ENCODE measurements at regions of chr16 and their contacts with region 1.

Region 1: DNA sequence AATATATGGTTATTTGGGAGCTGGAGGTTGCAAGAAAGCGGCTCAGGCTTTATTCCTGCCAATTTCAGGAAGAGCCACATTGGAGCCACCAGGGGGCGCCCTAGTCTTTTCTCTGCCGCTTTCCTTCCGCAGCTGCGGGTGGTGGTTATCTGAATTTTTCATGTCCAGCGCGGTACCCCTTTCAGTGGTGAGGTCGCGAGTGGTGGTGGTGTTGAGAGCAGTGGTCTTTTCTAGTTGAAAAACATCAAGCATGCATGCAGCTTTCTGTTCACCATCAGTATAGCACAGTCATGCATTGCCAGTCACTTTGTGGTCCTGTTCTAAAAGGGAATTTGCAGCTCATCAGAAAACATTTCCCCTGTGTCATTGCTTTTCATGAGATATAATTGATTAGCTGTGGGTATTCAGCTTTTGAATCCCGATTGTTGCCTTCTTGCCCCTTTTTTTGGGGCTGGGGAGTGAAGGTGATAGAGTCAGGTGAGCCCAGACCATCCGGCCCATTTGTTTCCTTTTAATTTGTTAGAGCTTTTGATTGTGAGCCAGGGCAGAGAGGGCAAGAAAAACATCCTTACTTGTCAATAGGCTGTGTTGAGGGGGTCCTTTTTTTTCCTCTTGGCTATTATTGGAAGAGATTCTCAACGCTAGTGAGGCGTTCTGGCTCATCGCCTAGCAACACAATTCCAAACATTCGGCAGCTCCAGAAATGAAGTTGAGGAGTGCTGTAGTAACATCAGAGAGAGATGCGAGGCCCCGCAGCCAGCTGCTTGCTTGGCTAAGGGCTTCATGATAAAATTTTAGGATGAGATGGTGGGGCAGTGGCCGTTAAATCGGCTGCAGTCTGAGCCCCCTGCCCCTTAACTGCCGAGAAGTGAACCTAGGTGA is 119.0 kb downstream of the SNX29 start:
- DNase-seq: peak; percentile 73
- ATAC-seq: peak; percentile 28
- H3K4me3 ChIP-seq: no peak overlapping the region
- H3K4me3 Mint-ChIP-seq: peak overlapping the region; percentile 57
- H3K27ac ChIP-seq: no peak overlapping the region
- H3K27ac Mint-ChIP-seq: no peak overlapping the region
- H3K4me1 ChIP-seq: peaks cover 6 to 8% of the 10 kb centered on the region in 2 donors
- H3K4me1 Mint-ChIP-seq: peaks cover 25% of the 10 kb centered on the region
- H3K27me3 ChIP-seq: no peaks in the 10 kb centered on the region
- H3K27me3 Mint-ChIP-seq: no peaks in the 10 kb centered on the region
- CTCF ChIP-seq: peak; percentile 96

Region 2: GRCh38 chr16:11949527-11949926 is 146.0 kb before region 1 on chr16:
- CTCF ChIA-PET with region 1: interaction called, 15 read pairs
- POLR2A ChIA-PET with region 1: interaction called, 8 read pairs
- intact Hi-C with region 1: no loop called
- DNase-seq: peak; percentile 78
- ATAC-seq: peak; percentile 91
- H3K4me3 ChIP-seq: no peak overlapping the region
- H3K4me3 Mint-ChIP-seq: no peak overlapping the region
- H3K27ac ChIP-seq: no peak overlapping the region
- H3K27ac Mint-ChIP-seq: peak overlapping the region; percentile 64
- H3K4me1 ChIP-seq: peaks cover 13 to 14% of the 10 kb centered on the region in 2 donors
- H3K4me1 Mint-ChIP-seq: peaks cover 9% of the 10 kb centered on the region
- H3K27me3 ChIP-seq: no peaks in the 10 kb centered on the region
- H3K27me3 Mint-ChIP-seq: no peaks in the 10 kb centered on the region
- CTCF ChIP-seq: peak; percentile 87

Region 3: DNA sequence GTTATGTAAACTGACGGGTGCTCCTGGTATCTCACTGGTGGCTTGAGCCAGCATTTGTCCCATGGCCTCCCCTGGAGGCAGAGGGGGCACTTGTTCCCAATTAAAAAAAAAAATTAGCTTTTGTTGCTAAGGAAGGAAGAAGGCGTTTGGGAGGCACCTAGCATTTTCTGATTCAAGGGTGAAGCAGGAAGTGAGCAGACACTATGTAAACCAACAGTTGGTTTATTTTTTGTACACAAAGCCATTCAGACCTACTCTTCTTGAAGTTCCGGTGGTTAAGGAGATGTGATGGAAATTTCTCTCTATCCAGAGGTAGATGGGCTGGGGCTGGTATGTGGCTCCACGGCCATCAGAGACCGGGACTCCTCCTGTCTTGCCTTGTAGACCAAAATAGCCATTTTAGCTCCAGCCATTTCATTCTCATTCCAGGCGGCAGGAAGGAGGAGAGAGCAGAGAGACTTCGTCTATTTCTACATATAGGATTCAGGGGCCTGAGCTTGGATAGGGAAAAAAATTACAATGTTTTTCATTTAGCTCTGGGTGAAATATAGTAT is 16.0 kb before region 1 on chr16:
- CTCF ChIA-PET with region 1: interaction called, 32 read pairs
- POLR2A ChIA-PET with region 1: interaction called, 3 read pairs
- intact Hi-C with region 1: no loop called
- DNase-seq: no peak
- ATAC-seq: no peak
- H3K4me3 ChIP-seq: no peak overlapping the region
- H3K4me3 Mint-ChIP-seq: no peak overlapping the region
- H3K27ac ChIP-seq: peak overlapping the region; percentile 71 to 79
- H3K27ac Mint-ChIP-seq: peak overlapping the region; percentile 82
- H3K4me1 ChIP-seq: peaks cover 31 to 57% of the 10 kb centered on the region in 2 donors
- H3K4me1 Mint-ChIP-seq: peaks cover 45% of the 10 kb centered on the region
- H3K27me3 ChIP-seq: no peaks in the 10 kb centered on the region
- H3K27me3 Mint-ChIP-seq: no peaks in the 10 kb centered on the region
- CTCF ChIP-seq: no peak

Region 4: DNA sequence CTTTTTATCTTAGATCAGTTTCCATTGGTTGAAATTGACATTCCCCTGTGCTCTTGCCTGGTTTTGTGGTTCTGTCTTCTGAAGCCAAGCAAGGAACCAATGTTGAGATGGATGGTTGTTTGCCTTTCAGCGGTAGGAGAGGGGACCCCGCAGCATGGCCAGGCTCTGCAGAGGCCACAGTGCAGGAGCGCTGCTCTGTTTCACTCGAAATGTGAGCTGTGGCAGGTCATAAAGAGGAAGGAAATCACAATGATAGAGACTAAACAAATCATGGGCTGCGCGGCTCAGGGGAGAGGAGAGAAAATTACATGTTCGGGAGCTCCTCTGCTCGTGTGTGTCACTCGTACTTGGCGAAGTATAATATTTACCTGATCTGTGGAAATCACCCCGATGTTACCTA is 29.2 kb after region 1 on chr16:
- CTCF ChIA-PET with region 1: interaction called, 14 read pairs
- POLR2A ChIA-PET with region 1: no interaction called
- intact Hi-C with region 1: no loop called
- DNase-seq: peak; percentile 46
- ATAC-seq: peak; percentile 74
- H3K4me3 ChIP-seq: no peak overlapping the region
- H3K4me3 Mint-ChIP-seq: peak overlapping the region; percentile 79
- H3K27ac ChIP-seq: peak overlapping the region in 1 of 2 donors; percentile 64
- H3K27ac Mint-ChIP-seq: peak overlapping the region; percentile 83
- H3K4me1 ChIP-seq: peaks cover 11 to 20% of the 10 kb centered on the region in 2 donors
- H3K4me1 Mint-ChIP-seq: peaks cover 41% of the 10 kb centered on the region
- H3K27me3 ChIP-seq: no peaks in the 10 kb centered on the region
- H3K27me3 Mint-ChIP-seq: no peaks in the 10 kb centered on the region
- CTCF ChIP-seq: no peak

Region 5: GRCh38 chr16:12168074-12169000 is 72.8 kb after region 1 on chr16:
- CTCF ChIA-PET with region 1: interaction called, 10 read pairs
- POLR2A ChIA-PET with region 1: no interaction called
- intact Hi-C with region 1: no loop called
- DNase-seq: no peak
- ATAC-seq: no peak
- H3K4me3 ChIP-seq: no peak overlapping the region
- H3K4me3 Mint-ChIP-seq: no peak overlapping the region
- H3K27ac ChIP-seq: no peak overlapping the region
- H3K27ac Mint-ChIP-seq: no peak overlapping the region
- H3K4me1 ChIP-seq: no peaks in the 10 kb centered on the region
- H3K4me1 Mint-ChIP-seq: peaks cover 17% of the 10 kb centered on the region
- H3K27me3 ChIP-seq: no peaks in the 10 kb centered on the region
- H3K27me3 Mint-ChIP-seq: no peaks in the 10 kb centered on the region
- CTCF ChIP-seq: no peak

Region 6: DNA sequence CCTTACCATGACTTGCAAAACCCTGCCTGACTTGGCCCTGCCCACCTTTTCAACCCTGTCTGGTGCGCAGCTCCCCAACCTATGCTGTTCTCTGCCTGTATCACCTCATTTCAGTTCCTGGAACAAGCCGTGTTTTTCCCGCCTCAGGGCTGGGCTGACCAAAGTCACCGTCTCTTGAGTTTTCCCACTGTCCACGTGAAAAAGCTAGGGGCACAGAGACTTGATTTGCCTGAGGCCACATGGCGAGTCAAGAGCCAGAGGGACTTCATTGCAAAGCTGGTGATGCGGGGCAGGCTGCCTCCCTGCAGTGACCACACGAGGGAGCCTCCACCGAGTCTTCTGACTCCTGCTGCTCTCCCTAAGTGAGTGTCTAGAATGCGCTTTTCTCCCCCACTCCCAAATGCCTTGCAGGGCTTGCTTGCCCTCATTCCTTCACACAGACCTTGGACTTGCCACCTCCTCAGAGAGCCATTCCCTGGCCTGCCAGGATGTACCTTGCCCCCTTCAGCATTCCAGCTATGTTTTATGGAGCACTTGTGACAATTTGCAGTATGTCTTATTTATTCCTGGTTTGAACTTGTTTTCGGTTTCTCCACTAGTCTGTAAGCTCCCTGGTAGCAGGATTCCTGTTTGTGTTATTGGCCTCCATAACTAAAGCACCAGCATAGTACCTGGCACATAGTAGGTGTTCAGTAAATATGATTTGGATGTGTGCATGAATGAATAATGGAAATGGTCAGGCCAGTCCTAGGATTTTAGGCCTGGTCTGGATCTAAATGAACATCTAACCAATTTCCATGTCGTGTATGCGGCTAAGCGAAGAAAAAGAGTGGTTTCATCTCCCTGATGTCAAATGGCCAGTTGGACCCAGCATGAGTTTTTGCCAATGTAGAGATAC is 133.3 kb after region 1 on chr16:
- CTCF ChIA-PET with region 1: interaction called, 15 read pairs
- POLR2A ChIA-PET with region 1: no interaction called
- intact Hi-C with region 1: no loop called
- DNase-seq: peak; percentile 34
- ATAC-seq: peak; percentile 33
- H3K4me3 ChIP-seq: no peak overlapping the region
- H3K4me3 Mint-ChIP-seq: no peak overlapping the region
- H3K27ac ChIP-seq: peak overlapping the region in 1 of 2 donors; percentile 27
- H3K27ac Mint-ChIP-seq: no peak overlapping the region
- H3K4me1 ChIP-seq: peaks cover 0 to 2% of the 10 kb centered on the region in 2 donors
- H3K4me1 Mint-ChIP-seq: peaks cover 42% of the 10 kb centered on the region
- H3K27me3 ChIP-seq: no peaks in the 10 kb centered on the region
- H3K27me3 Mint-ChIP-seq: no peaks in the 10 kb centered on the region
- CTCF ChIP-seq: peak; percentile 18

Region 7: GRCh38 chr16:12819126-12820117 is 723.9 kb after region 1 on chr16:
- CTCF ChIA-PET with region 1: interaction called, 39 read pairs
- POLR2A ChIA-PET with region 1: no interaction called
- intact Hi-C with region 1: no loop called
- DNase-seq: peak; percentile 75
- ATAC-seq: peak; percentile 75
- H3K4me3 ChIP-seq: no peak overlapping the region
- H3K4me3 Mint-ChIP-seq: no peak overlapping the region
- H3K27ac ChIP-seq: no peak overlapping the region
- H3K27ac Mint-ChIP-seq: no peak overlapping the region
- H3K4me1 ChIP-seq: no peaks in the 10 kb centered on the region
- H3K4me1 Mint-ChIP-seq: peaks cover 1% of the 10 kb centered on the region
- H3K27me3 ChIP-seq: no peaks in the 10 kb centered on the region
- H3K27me3 Mint-ChIP-seq: peaks cover 14% of the 10 kb centered on the region
- CTCF ChIP-seq: peak; percentile 94

Measured in B cell (primary cell).